Tibial artery (tissue), 4 donors: ENCODE measurements at regions of chr18 and their contacts with region 1.

Region 1: DNA sequence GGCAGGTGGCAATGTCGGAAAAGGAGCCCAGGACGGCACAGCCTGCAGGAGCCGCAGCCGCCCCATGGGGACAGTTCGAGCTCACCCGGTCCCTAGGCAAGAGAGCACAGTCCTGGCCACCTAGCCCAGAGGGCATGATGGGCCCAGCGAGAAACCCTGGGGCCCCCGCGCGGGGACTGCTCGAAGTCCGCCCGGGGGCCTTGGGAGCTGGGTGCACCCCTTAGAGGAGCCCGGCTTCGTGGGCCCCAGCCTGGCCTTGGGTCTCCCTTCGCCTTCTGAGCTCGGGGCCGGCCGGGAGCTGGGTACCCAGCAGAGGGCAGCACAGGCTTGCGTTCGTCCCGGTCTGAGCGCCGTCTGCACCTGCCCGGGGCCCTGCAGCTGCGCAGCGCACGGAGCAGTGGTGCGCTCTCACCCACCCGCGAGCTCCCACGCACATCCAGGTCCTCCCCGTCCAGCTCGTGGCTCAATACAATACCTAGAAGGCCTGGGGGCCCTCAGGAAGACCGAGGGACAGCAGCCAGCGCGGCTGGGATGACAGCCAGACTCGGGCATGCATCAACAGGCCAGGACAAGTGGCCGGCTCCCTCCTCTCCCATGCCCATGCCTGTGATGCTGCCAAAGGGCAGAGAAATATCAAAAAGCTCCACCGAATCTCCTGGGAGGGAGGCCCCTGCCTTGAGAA is 96.2 kb upstream of the ZNF532 start:
- DNase-seq: peak; percentile 57 to 82
- H3K4me3 ChIP-seq: peak overlapping the region; percentile 33 to 37
- H3K27ac ChIP-seq: no peak overlapping the region
- H3K4me1 ChIP-seq: peaks cover 0 to 14% (median 9%) of the 10 kb centered on the region in 4 donors
- H3K27me3 ChIP-seq: peaks cover 0 to 17% of the 10 kb centered on the region in 2 donors
- CTCF ChIP-seq: peak; percentile 79 to 80

Region 2: GRCh38 chr18:58529714-58530354 is 238.6 kb before region 1 on chr18:
- intact Hi-C with region 1: loop called (anchors 10 kb)
- DNase-seq: peak in 1 of 2 donors; percentile 44
- H3K4me3 ChIP-seq: no peak overlapping the region
- H3K27ac ChIP-seq: no peak overlapping the region
- H3K4me1 ChIP-seq: no peaks in the 10 kb centered on the region
- H3K27me3 ChIP-seq: no peaks in the 10 kb centered on the region
- CTCF ChIP-seq: peak; percentile 27 to 34

Region 3: DNA sequence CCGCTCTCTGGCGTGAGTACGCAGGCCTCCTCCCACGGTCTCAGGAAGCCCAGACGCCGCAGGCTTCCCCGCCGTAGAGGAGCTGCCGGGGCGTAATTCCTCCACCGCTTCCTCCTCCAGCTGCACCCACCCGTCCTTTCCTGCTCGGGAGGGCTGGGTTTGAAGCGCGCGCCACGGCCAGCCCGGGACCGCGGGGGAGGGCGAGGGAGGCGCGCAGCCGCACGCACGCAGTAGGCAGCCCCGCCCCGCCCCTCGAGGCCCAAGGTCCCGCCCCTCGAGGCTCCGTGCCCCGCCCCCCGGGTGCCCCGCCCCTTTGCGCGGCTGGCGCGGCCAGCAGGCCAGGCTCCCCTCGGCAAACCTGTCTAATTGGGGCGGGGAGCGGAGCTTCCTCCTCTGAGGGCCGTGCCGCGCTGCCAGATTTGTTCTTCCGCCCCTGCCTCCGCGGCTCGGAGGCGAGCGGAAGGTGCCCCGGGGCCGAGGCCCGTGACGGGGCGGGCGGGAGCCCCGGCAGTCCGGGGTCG is 97.3 kb before region 1 on chr18 and contains the start of gene MALT1:
- intact Hi-C with region 1: loop called (anchors 10 kb)
- DNase-seq: peak; percentile 90 to 94
- H3K4me3 ChIP-seq: peak within 1 kb of the TSS; percentile 75 to 78
- H3K27ac ChIP-seq: peak within 1 kb of the TSS; percentile 75 to 87
- H3K4me1 ChIP-seq: peaks cover 0 to 21% (median 4%) of the 10 kb centered on the region in 4 donors
- H3K27me3 ChIP-seq: peaks cover 0 to 2% of the 10 kb centered on the region in 2 donors
- CTCF ChIP-seq: no peak

Region 4: DNA sequence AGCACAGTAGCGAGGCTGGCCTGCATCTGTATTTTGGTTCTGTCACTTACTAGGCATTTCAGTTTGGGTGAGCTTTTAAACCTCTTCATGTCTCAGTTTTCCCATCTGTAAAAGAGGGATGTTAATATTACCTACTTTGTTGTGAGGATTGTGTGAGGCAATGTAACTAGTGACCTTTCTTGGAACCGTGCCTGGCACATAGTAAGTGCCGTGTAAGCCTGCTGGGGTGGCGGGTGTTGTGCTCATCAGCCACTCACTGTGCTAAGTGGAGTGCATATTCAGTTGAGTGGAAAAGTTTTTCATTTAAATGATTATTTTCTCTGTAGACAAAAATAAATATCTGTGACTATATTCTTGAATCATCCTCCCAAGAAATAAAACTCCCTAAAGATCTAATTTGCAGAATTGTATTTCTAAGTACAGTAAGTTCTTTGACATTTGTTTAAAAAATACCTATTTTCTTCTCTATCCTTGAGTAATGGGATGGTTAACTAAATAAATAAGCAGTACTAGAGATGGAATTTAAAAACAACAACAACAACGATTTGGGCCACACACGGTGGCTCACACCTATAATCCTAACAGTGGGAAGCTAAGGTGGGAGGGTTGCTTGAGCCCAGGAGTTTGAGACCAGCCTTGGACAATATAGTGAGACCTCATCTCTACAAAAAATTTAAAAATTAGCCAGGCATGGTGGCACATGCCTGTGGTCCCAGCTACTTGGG is 40.5 kb before region 1 on chr18:
- intact Hi-C with region 1: no loop called
- DNase-seq: no peak
- H3K4me3 ChIP-seq: no peak overlapping the region
- H3K27ac ChIP-seq: no peak overlapping the region
- H3K4me1 ChIP-seq: no peaks in the 10 kb centered on the region
- H3K27me3 ChIP-seq: no peaks in the 10 kb centered on the region
- CTCF ChIP-seq: no peak

Region 5: GRCh38 chr18:59070181-59070912 is 301.9 kb after region 1 on chr18:
- intact Hi-C with region 1: loop called (anchors 5 kb)
- DNase-seq: peak; percentile 79 to 88
- H3K4me3 ChIP-seq: no peak overlapping the region
- H3K27ac ChIP-seq: no peak overlapping the region
- H3K4me1 ChIP-seq: peaks cover 0 to 6% (median 0%) of the 10 kb centered on the region in 4 donors
- H3K27me3 ChIP-seq: no peaks in the 10 kb centered on the region
- CTCF ChIP-seq: peak; percentile 83 to 93